ENCODE measurements at regions of chr3 and their contacts with region 1.

Region 1: DNA sequence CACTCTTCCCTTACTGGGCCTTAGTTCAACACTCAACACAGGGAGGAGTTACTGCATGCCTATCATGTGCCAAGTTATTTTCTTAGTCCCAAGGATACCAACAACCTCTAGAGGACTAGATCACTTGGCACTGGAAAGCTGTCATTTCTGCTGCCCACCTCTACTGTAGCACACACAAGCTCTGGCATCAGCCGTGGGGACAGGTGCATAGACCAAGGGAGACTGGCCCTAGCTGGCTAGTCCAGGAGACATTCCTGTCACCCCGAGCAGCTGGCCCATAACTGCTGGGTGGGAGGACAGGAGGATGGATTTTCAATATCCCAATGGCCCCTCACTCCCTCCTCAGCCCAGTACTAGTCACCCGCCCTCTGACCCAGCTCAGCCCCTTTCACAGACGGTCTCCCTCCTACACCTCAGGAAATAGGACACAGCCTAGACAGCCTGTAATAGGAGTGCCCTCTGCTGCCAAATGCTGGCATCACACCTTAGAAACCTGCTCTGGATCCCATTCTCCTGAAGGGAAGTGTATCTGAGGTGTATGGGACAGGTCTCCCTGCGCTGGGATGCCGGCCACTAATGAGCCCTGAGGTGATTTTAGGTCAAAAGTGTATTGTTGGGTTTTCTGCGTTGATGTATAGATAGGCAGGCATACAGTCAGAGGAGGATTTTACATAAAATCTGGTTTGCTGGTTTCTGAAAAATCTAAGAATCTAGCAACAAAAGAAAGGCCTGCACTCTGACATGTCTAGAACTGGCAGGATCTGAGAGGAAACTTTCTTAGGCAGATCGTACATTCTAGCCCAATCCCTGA is 3.4 kb upstream of the DZIP1L start:
- DNase-seq: peak; percentile 57 to 79
- ATAC-seq: peak; percentile 26 to 67 (median 52)
- H3K4me3 ChIP-seq: no peak overlapping the region
- H3K27ac ChIP-seq: no peak overlapping the region
- H3K4me1 ChIP-seq: peaks cover 5 to 25% (median 19%) of the 10 kb centered on the region in 9 donors
- H3K27me3 ChIP-seq: no peaks in the 10 kb centered on the region
- CTCF ChIP-seq: peak; percentile 59 to 89 (median 82)

Region 2: DNA sequence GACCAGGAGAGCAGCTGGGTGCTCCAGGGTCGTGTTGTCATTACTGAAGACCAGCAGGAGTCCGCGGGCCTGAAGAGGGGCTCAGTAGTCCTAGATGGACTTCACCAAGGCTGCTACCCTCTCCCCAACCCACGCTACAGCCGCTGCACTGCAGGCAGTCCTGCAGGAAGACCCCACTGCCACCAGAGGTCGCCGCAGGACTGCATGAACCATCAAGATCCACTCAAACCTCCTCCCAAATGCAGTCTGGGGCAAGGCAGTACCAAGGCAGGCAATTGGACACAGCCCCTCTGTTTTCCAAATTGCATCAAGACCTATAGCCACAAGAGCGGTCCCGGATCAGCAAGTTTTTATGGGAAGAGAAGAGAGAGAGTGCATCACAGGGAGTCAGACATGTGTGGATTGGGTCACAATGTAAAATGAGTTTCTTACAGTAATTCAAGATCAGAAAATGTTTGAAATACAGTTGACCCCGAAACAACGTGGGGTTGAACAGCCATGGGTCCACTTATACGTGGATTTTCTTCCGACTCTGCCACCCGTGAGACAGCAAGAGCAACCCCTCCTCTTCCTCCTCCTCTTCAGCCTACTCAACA is 50.1 kb before region 1 on chr3:
- intact Hi-C with region 1: loop called (anchors 1 to 5 kb)
- DNase-seq: peak; percentile 74 to 80
- ATAC-seq: peak; percentile 83 to 94 (median 91)
- H3K4me3 ChIP-seq: no peak overlapping the region
- H3K27ac ChIP-seq: no peak overlapping the region
- H3K4me1 ChIP-seq: peaks cover 0 to 5% (median 0%) of the 10 kb centered on the region in 9 donors
- H3K27me3 ChIP-seq: no peaks in the 10 kb centered on the region
- CTCF ChIP-seq: peak; percentile 93 to 99 (median 97)

Region 3: DNA sequence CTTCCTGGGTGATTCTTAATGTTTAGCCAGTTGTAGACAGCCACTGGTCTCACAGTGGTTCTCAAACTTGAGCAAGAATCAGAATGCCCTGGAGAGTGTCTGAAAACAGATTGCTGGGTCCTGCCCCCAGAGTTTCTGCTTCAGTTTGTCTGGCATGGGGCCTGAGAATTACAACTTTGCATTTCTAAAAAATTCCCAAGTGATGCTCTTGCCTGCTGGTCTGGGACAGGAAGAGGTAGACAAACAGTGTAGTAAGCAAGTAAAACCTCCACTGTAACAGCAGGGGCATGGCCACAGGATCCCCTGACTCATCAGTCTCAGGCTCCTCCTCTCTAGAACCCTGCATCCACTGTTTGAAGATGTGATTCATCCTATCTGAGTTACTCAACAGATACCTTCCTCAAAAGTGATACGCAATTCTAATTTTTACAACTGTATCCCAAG is 39.9 kb before region 1 on chr3:
- intact Hi-C with region 1: loop called in 1 of 10 experiments (anchors 5 kb)
- DNase-seq: no peak
- ATAC-seq: peak in 2 of 8 donors; percentile 19 to 65
- H3K4me3 ChIP-seq: no peak overlapping the region
- H3K27ac ChIP-seq: no peak overlapping the region
- H3K4me1 ChIP-seq: peaks cover 0 to 35% (median 0%) of the 10 kb centered on the region in 9 donors
- H3K27me3 ChIP-seq: no peaks in the 10 kb centered on the region
- CTCF ChIP-seq: no peak

Region 4: DNA sequence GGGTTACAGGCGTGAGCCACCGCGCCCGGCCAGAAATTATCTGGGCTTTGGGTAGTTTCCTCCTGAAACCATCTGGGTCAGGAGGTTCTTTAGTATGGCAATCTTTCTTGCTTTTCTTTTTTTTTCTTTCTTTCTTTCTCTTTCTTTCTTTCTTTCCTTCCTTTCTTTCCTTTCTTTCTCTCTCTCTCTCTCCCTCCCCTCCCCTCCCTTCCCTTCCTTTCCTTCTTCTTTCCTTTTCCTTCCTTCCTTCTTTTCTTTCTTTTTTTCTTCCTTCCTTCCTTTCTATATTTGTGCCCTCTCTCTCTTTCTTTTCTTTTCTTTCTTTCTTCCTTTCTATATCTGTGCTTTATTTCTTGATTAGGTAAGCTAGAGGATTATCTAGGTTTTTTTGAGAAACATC is 38.9 kb after region 1 on chr3:
- intact Hi-C with region 1: no loop called
- DNase-seq: no peak
- ATAC-seq: no peak
- H3K4me3 ChIP-seq: no peak overlapping the region
- H3K27ac ChIP-seq: no peak overlapping the region
- H3K4me1 ChIP-seq: no peaks in the 10 kb centered on the region
- H3K27me3 ChIP-seq: no peaks in the 10 kb centered on the region
- CTCF ChIP-seq: no peak

Region 5: GRCh38 chr3:138174421-138175122 is 55.8 kb after region 1 on chr3 and contains the start of gene DBR1:
- intact Hi-C with region 1: loop called in 2 of 10 experiments (anchors 5 to 10 kb)
- DNase-seq: peak; percentile 69 to 91
- ATAC-seq: peak; percentile 91 to 97 (median 95)
- H3K4me3 ChIP-seq: peak within 1 kb of the TSS; percentile 51 to 97 (median 73)
- H3K27ac ChIP-seq: peak within 1 kb of the TSS in 9 of 10 donors; percentile 67 to 94 (median 83)
- H3K4me1 ChIP-seq: peaks cover 0 to 30% (median 14%) of the 10 kb centered on the region in 9 donors
- H3K27me3 ChIP-seq: no peaks in the 10 kb centered on the region
- CTCF ChIP-seq: no peak
- total RNA-seq, gene DBR1: 6.4 to 10.5 (median 9.0) TPM